Dorsolateral prefrontal cortex (tissue), 120 donors: ENCODE measurements at regions of chr11 and their contacts with region 1.

Region 1: DNA sequence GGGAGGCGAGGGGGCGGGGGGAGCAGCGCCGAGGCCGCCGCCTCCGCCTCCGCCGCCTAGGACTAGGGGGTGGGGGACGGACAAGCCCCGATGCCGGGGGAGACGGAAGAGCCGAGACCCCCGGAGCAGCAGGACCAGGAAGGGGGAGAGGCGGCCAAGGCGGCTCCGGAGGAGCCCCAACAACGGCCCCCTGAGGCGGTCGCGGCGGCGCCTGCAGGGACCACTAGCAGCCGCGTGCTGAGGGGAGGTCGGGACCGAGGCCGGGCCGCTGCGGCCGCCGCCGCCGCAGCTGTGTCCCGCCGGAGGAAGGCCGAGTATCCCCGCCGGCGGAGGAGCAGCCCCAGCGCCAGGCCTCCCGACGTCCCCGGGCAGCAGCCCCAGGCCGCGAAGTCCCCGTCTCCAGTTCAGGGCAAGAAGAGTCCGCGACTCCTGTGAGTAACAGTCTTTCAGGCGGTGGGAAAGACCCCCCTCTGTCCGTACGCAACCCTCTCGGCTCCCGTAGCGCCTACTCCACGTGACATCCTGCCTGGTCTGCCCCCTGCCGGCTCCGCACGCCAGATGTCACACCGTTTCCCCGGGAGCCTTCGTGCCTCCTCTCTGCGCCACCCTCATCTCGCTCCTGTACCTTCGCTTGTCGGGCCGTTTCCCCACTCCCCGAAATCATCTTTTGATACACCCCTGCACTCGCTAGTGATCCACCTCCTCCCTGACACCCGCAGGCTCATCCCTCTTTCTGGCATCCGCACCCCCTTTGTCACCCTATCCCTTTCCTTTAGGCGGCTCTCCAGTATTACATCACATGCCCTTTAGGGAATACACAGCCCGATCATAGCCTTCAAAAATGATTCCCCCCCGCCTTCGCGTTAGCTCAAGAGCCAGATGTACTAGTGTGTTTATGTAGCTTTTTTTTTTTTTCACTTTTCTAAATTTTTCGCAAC is 598 bp downstream of the ZFP91 start:
- DNase-seq: peak; percentile 83 to 94 (median 91)
- H3K4me3 ChIP-seq: peak overlapping the region; percentile 63 to 99 (median 94)
- H3K27ac ChIP-seq: peak overlapping the region; percentile 92 to 100 (median 100)
- H3K27me3 ChIP-seq: no peaks in the 10 kb centered on the region
- CTCF ChIP-seq: peak; percentile 67 to 97 (median 87)

Region 2: DNA sequence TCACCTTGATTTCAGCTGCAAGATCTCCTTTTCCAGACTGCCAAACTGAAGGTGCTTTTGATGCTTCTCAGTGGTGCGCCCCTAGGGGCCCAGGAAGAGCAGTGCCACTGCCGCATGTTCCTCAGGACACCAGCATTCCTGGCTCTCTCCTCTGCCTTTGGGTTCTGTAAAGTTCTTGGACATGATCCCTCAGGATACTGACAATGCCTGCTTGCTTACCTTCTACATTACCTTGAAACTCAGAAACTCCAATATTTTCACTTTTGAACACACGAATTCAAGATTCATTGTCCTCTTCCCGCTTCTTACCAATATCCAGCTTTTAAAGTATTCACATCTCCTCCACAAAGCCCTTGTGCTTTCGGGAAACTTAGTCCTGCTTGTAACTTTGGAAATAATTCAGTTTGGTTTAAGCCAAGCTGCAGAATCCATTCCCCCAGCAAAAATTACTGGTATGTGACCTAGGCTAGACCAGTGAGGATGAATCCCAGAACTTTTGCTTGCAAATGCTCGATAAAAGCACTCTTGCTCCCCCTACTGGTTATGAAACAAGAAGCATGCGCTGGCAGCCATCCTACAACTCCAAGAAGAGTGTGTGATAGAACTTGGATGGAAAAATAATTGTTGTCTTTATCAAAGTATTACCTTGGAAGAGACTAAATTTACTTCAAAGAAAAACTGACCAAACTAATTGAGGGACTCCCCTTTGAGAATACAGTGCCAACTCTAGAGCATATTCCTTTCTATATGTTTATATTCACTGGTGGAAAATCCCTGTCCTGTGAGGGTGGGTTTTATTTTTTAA is 55.0 kb before region 1 on chr11:
- intact Hi-C with region 1: loop called in 1 of 2 experiments (anchors 10 kb)
- DNase-seq: peak in 8 of 10 donors; percentile 49 to 72 (median 54)
- H3K4me3 ChIP-seq: peak overlapping the region in 18 of 59 donors; percentile 1 to 32 (median 20)
- H3K27ac ChIP-seq: peak overlapping the region in 21 of 59 donors; percentile 8 to 59 (median 37)
- H3K27me3 ChIP-seq: no peaks in the 10 kb centered on the region
- CTCF ChIP-seq: peak; percentile 49 to 88 (median 76)

Region 3: GRCh38 chr11:58629857-58630256 is 50.4 kb after region 1 on chr11:
- intact Hi-C with region 1: loop called in 1 of 2 experiments (anchors 5 kb)
- DNase-seq: no peak
- H3K4me3 ChIP-seq: no peak overlapping the region
- H3K27ac ChIP-seq: peak overlapping the region in 1 of 59 donors; percentile 16
- H3K27me3 ChIP-seq: no peaks in the 10 kb centered on the region
- CTCF ChIP-seq: peak in 53 of 56 donors; percentile 10 to 70 (median 46)

Region 4: GRCh38 chr11:58788355-58789023 is 209.0 kb after region 1 on chr11:
- intact Hi-C with region 1: loop called in 1 of 2 experiments (anchors 5 kb)
- DNase-seq: peak in 4 of 10 donors; percentile 19 to 58 (median 38)
- H3K4me3 ChIP-seq: no peak overlapping the region
- H3K27ac ChIP-seq: no peak overlapping the region
- H3K27me3 ChIP-seq: peaks cover 0 to 7% (median 0%) of the 10 kb centered on the region in 45 donors
- CTCF ChIP-seq: peak in 54 of 56 donors; percentile 29 to 77 (median 64)

Region 5: DNA sequence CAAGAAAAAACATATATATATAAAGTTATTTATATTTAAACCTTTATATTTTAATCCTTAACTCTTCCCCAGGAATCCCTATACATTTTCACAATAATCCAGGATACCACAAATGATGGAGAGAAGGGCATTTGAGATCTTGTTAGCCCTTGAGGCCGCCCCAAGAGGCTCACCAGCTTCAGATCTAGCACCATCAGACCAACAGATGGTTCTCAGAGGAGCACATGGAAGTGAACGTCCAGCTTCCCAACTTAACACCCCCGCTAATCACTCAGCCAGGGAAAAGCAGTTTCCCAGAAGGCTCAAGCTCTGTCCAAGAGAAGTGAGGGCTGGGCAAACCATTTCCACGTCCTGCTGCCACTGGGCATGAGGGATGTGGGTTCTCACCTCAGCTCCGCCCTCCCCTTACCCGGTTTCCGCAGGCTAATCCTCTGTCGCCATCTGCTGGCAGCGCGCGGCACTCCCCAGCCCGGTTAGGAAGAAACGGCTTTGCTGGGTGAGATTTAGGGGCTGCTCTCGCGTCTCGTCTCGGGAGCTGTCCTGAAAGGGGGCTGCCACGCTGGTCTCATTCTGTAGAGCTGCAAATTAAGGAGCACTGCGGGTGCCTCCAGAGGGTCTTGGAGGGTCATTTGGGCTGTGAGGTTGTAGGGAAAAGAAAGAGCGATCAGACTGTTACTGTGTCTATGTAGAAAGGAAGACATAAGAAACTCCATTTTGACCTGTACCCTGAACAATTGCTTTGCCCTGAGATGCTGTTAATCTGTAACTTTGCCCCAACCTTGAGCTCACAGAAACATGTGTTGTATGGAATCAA is 556.4 kb after region 1 on chr11:
- intact Hi-C with region 1: loop called in 1 of 2 experiments (anchors 10 kb)
- DNase-seq: peak; percentile 58 to 87 (median 76)
- H3K4me3 ChIP-seq: peak overlapping the region in 34 of 59 donors; percentile 8 to 51 (median 37)
- H3K27ac ChIP-seq: no peak overlapping the region
- H3K27me3 ChIP-seq: no peaks in the 10 kb centered on the region
- CTCF ChIP-seq: peak; percentile 75 to 97 (median 93)